Left ventricle myocardium inferior (tissue), 1 donor: ENCODE measurements at regions of chr1 and their contacts with region 1.

Region 1: GRCh38 chr1:89632657-89633247 is at the start of gene LRRC8C:
- DNase-seq: peak; percentile 89
- H3K4me3 ChIP-seq: peak within 1 kb of the TSS; percentile 94
- H3K27ac ChIP-seq: peak within 1 kb of the TSS; percentile 98
- H3K4me1 ChIP-seq: peaks cover 84% of the 10 kb centered on the region
- H3K27me3 ChIP-seq: no peaks in the 10 kb centered on the region
- CTCF ChIP-seq: peak; percentile 74
- total RNA-seq, gene LRRC8C: 6.2 TPM

Region 2: GRCh38 chr1:89566761-89567174 is 66.0 kb before region 1 on chr1:
- intact Hi-C with region 1: no loop called
- DNase-seq: peak; percentile 60
- H3K4me3 ChIP-seq: peak overlapping the region; percentile 19
- H3K27ac ChIP-seq: peak overlapping the region; percentile 76
- H3K4me1 ChIP-seq: peaks cover 24% of the 10 kb centered on the region
- H3K27me3 ChIP-seq: no peaks in the 10 kb centered on the region
- CTCF ChIP-seq: no peak

Region 3: DNA sequence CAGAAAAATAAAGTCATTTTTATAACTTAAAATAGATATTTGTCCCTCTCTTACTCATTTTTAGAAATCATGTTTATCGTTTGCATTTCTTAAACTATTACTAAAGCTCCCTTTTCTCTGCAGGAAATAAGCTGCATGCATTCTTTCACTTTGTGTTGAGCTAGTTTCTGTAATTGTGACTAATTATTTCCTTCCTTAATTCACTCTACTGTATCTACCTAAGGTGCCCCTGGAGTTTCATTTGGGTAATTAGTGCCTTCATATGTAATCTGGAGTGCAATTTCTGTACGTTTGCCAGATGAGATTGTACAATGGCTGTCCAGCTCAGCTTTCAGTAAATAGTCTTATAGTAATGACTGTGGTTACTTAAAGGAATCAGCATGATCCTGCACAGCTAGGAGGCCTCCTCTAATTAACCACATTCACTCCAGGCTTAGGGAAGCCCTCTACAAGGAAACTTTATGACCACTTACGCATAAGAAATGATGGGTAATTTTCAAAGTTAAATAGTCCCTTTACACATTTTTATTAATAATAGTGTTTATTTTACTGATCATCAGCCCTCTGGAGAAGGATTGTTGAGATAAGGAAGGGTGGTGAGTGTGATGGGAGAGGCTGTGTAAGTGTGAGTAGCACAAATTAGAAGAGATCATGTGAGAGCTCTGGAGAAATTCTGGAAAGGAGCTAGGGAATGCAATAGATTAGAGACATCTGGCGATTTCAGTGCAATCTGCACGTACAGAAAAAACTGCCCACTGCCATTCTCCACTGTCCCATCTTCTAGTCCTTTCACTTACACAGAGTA is 87.0 kb after region 1 on chr1:
- intact Hi-C with region 1: loop called (anchors 10 kb)
- DNase-seq: no peak
- H3K4me3 ChIP-seq: no peak overlapping the region
- H3K27ac ChIP-seq: peak overlapping the region; percentile 79
- H3K4me1 ChIP-seq: peaks cover 60% of the 10 kb centered on the region
- H3K27me3 ChIP-seq: no peaks in the 10 kb centered on the region
- CTCF ChIP-seq: no peak

Region 4: DNA sequence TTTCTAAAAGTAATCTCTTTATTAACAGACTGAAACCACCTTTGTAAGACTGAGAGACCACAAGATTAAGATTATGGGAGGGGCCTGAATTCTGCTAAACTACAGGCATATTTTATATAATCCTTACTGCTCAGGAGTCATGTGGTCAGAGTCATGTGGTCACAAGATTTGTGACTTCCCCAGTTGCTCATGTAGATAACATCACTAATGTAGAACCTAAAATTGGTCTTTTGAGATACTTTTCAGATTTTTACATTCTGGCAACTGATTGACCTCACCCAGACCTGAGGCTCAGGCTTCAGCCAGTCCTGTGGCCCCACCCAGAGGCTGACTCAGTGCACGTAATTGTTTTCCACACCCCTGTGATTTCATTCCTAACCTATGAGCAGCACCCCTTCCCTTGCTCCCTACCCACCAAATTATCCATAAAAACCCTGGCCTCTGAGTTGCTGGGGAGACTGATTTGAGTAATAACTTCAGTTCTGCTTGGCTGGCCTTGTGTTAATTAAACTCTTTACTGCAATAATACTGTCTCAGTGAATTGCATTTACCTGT is 320.4 kb after region 1 on chr1:
- intact Hi-C with region 1: no loop called
- DNase-seq: no peak
- H3K4me3 ChIP-seq: no peak overlapping the region
- H3K27ac ChIP-seq: no peak overlapping the region
- H3K4me1 ChIP-seq: peaks cover 4% of the 10 kb centered on the region
- H3K27me3 ChIP-seq: no peaks in the 10 kb centered on the region
- CTCF ChIP-seq: peak; percentile 52